ENCODE measurements at regions of chr4 and their contacts with region 1.

Region 1: GRCh38 chr4:185573651-185574199 is 38.4 kb upstream of the PDLIM3 start:
- DNase-seq: no peak
- H3K4me3 ChIP-seq: no peak overlapping the region
- H3K27ac ChIP-seq: peak overlapping the region; percentile 69 to 94
- H3K4me1 ChIP-seq: peaks cover 0 to 57% (median 24%) of the 10 kb centered on the region in 4 donors
- H3K27me3 ChIP-seq: no peaks in the 10 kb centered on the region
- CTCF ChIP-seq: no peak

Region 2: GRCh38 chr4:185523862-185524261 is 49.9 kb before region 1 on chr4:
- intact Hi-C with region 1: no loop called
- DNase-seq: no peak
- H3K4me3 ChIP-seq: no peak overlapping the region
- H3K27ac ChIP-seq: peak overlapping the region; percentile 63 to 99
- H3K4me1 ChIP-seq: peaks cover 0 to 63% (median 12%) of the 10 kb centered on the region in 4 donors
- H3K27me3 ChIP-seq: no peaks in the 10 kb centered on the region
- CTCF ChIP-seq: no peak

Region 3: GRCh38 chr4:185534866-185535611 is 38.7 kb before region 1 on chr4 and contains the start of gene PDLIM3:
- intact Hi-C with region 1: loop called (anchors 5 kb)
- DNase-seq: peak; percentile 57 to 91
- H3K4me3 ChIP-seq: peak within 1 kb of the TSS; percentile 93 to 98
- H3K27ac ChIP-seq: peak within 1 kb of the TSS; percentile 99 to 100
- H3K4me1 ChIP-seq: peaks cover 0 to 42% (median 6%) of the 10 kb centered on the region in 4 donors
- H3K27me3 ChIP-seq: no peaks in the 10 kb centered on the region
- CTCF ChIP-seq: no peak